Activated naive CD4-positive, alpha-beta T cell treated with anti-CD3 and anti-CD28 coated beads for 36 hours (primary cell): ENCODE measurements at regions of chr6 and their contacts with region 1.

Region 1: GRCh38 chr6:121436960-121437850 is 1.8 kb downstream of the GJA1 start:
- DNase-seq: peak; percentile 28
- H3K4me3 Mint-ChIP-seq: peak overlapping the region; percentile 75
- H3K27ac Mint-ChIP-seq: no peak overlapping the region
- H3K4me1 Mint-ChIP-seq: peaks cover 19% of the 10 kb centered on the region
- H3K27me3 Mint-ChIP-seq: peaks cover 13% of the 10 kb centered on the region

Region 2: GRCh38 chr6:121205569-121205968 is 231.6 kb before region 1 on chr6:
- CTCF ChIA-PET with region 1: no interaction called
- intact Hi-C with region 1: no loop called
- DNase-seq: no peak
- H3K4me3 Mint-ChIP-seq: no peak overlapping the region
- H3K27ac Mint-ChIP-seq: no peak overlapping the region
- H3K4me1 Mint-ChIP-seq: no peaks in the 10 kb centered on the region
- H3K27me3 Mint-ChIP-seq: no peaks in the 10 kb centered on the region

Region 3: GRCh38 chr6:122322824-122323223 is 885.6 kb after region 1 on chr6:
- CTCF ChIA-PET with region 1: no interaction called
- intact Hi-C with region 1: loop called (anchors 1 kb)
- DNase-seq: no peak
- H3K4me3 Mint-ChIP-seq: peak overlapping the region; percentile 78
- H3K27ac Mint-ChIP-seq: peak overlapping the region; percentile 11
- H3K4me1 Mint-ChIP-seq: peaks cover 19% of the 10 kb centered on the region
- H3K27me3 Mint-ChIP-seq: no peaks in the 10 kb centered on the region